Esophagus muscularis mucosa (tissue), 4 donors: ENCODE measurements at regions of chr1 and their contacts with region 1.

Region 1: DNA sequence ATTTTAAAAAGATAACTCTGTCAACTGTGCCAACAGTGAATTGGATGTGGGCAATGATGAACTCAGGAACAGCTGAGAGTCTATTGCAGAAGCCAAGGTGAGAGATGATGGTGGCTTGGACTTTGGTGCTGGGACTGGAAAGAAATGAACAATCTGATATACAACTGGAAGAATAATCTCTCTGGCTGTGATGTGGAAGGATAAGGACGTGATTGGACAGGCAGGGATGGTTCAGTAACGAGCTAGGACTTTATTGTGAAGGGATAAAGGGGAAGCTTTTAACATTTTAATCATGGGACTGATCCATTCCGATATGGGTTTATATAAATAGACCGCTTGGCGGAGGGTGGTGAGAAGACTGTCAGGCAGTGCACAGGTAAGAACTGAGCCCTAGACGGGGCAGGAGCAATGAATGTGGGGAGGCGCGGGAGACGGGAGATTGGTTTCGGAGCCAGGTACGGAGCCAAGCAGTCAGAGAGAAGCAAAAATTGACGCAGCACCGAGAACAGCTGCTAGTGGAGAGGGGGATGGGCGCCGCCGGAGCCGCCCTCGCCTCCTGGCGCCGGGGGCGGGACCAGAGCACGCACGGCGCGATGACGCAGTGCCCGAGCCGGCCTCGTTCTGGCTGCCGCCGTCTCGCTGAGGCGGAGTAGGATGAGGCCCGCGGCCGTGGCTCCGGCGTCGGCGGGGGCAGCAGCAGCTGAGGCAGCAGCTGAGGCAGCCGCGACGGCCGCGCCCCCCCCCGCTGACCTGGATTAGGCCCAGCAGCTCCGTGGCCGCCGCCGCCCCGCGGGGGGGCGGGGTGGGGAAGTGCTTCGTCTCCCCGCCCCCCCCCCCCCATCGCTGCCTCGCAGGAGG is at the start of gene RNF11:
- DNase-seq: peak; percentile 97
- H3K4me3 ChIP-seq: peak within 1 kb of the TSS; percentile 71 to 98 (median 91)
- H3K27ac ChIP-seq: peak within 1 kb of the TSS; percentile 93 to 98 (median 95)
- H3K4me1 ChIP-seq: peaks cover 22 to 43% (median 41%) of the 10 kb centered on the region in 4 donors
- H3K27me3 ChIP-seq: no peaks in the 10 kb centered on the region
- CTCF ChIP-seq: no peak
- EP300 ChIP-seq: no peak
- POLR2A ChIP-seq: peak; percentile 87
- total RNA-seq, gene RNF11: 101 to 141 (median 115) TPM

Region 2: DNA sequence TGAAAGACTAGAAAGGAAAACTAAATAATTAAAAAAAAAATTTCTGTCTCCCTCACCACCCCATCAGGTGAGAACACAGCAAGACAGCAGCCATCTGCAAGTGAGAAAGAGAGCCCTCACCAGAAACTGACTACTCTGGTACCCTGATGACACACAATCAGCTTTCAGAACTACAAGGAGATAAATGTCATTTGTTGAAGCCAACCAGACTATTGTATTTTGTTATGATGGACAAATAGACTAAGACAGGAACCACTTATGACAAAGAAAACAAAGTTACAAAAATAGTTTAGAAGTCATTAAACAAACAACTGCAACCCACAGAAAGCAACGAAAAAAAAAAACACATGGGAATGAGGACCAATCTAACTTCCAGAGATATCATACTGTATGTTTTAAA is 374.1 kb before region 1 on chr1:
- intact Hi-C with region 1: no loop called
- DNase-seq: no peak
- H3K4me3 ChIP-seq: no peak overlapping the region
- H3K27ac ChIP-seq: no peak overlapping the region
- H3K4me1 ChIP-seq: no peaks in the 10 kb centered on the region
- H3K27me3 ChIP-seq: no peaks in the 10 kb centered on the region
- CTCF ChIP-seq: no peak
- EP300 ChIP-seq: no peak
- POLR2A ChIP-seq: no peak

Region 3: DNA sequence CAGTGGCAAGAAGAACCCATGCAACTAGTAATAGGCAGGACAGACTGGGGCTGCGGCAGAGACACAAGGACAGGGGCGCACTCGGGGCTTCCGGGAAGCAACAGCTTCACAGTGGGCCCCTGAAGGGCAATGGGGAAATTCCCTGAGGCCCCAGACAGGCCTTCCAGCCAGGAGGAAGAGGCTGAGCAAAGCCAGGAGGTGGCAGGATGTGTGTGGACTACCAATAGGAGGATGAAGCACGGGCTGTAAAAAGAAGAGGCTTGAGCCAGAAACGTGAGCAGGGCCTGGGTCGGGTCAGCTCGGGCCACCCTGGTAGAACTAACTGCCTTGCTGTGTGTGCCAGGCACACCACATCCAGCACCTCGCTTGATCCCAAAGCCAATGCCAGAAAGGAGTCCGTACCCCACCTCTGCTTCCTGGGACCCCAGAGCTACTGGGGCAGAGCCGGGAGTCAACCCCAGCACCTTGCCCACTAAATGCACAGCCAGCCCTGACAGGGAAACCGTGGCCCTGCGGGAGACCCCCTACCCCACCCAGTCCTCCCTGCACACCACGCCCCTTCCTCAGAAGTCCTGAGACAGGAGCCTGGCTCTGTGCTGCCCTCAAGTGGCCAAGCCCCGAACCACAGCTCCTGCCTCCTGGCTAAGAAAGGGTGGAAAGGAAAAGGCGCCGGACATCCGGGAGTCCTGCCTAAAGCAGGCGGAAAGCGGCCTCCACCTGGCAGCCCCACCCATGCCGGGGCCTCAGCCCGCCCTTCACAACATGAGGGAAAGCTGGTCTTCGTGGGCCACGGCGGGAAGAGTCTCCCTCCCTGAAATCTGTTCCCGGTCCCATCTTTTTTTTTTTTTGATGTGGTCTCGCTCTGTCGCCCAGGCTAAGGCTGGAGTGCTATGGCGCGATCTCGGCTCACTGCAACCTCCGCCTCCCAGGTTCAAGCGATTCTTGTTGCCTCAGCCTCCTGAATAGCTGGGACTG is 60.8 kb after region 1 on chr1:
- intact Hi-C with region 1: loop called (anchors 10 kb)
- DNase-seq: no peak
- H3K4me3 ChIP-seq: peak overlapping the region; percentile 51 to 61 (median 56)
- H3K27ac ChIP-seq: no peak overlapping the region
- H3K4me1 ChIP-seq: peaks cover 12 to 17% (median 14%) of the 10 kb centered on the region in 4 donors
- H3K27me3 ChIP-seq: peaks cover 0 to 12% (median 0%) of the 10 kb centered on the region in 4 donors
- CTCF ChIP-seq: peak; percentile 88 to 99 (median 88)
- EP300 ChIP-seq: no peak
- POLR2A ChIP-seq: no peak

Region 4: DNA sequence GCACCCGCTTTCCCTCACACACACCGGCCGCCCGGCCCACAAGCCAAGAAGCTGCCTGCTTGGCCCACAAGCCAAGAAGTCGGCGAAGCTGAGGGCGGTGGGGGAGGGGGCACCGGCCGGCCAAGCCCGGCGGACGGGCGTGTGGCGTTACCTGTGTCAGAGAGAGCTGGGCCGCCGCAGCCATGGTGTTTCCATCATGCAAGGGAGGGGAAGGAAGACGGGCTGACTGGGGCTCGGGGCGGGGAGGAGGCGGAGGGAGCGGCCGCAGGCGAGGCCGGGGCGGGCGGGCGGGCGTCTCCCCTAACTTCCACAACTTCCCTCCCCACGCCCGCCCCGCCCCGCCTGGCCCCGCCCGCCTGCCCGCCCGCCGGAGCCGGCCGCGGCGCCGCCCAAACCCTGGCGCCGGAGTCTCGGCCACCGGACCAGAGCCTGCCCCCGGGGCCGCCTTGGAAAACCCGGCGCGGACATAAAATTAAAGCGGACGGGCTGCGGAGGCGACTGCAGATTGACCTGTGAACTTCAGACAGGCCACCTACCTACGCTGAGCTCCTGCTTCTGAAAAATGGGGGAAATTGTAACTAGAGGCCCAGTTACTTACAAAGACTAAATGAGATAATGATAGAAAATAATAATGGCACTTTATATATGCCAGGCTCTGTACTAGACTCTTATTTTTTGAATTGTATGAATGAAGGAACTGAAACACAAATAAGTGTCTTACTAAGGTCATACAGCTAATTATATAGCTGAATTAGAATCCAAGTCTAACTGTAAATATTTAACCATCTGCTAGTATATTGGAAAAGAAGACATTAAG is 283.4 kb after region 1 on chr1 and contains the start of gene EPS15:
- intact Hi-C with region 1: loop called (anchors 10 kb)
- DNase-seq: peak; percentile 96
- H3K4me3 ChIP-seq: peak within 1 kb of the TSS; percentile 93 to 99 (median 94)
- H3K27ac ChIP-seq: peak within 1 kb of the TSS; percentile 89 to 93 (median 91)
- H3K4me1 ChIP-seq: peaks cover 21 to 38% (median 36%) of the 10 kb centered on the region in 4 donors
- H3K27me3 ChIP-seq: no peaks in the 10 kb centered on the region
- CTCF ChIP-seq: no peak
- EP300 ChIP-seq: no peak
- POLR2A ChIP-seq: peak; percentile 8
- total RNA-seq, gene EPS15: 49.8 to 84.3 (median 62.5) TPM